HCT116 (cell line): ENCODE measurements at regions of chr11 and their contacts with region 1.

Region 1: GRCh38 chr11:47355283-47356128 is 3.0 kb upstream of the MYBPC3 start:
- DNase-seq: peak; percentile 92
- ATAC-seq: peak; percentile 95
- H3K4me3 ChIP-seq: peak overlapping the region; percentile 13 to 42
- H3K27ac ChIP-seq: peak overlapping the region; percentile 8; the same call in 1 of the 2 replicates
- H3K4me1 ChIP-seq: peaks cover 0 to 13% of the 10 kb centered on the region in 2 experiments; a peak in 2 of 4 replicates
- H3K27me3 ChIP-seq: no peaks in the 10 kb centered on the region
- CTCF ChIP-seq: peak; percentile 96 to 100 (median 98)
- POLR2A ChIP-seq: peak; percentile 48
- RAD21 ChIP-seq: peak; percentile 99

Region 2: GRCh38 chr11:46889689-46890475 is 465.6 kb before region 1 on chr11:
- CTCF ChIA-PET with region 1: no interaction called
- POLR2A ChIA-PET with region 1: no interaction called
- RAD21 ChIA-PET with region 1: no interaction called
- intact Hi-C with region 1: loop called (anchors 1 kb)
- DNase-seq: peak; percentile 47
- ATAC-seq: peak; percentile 87
- H3K4me3 ChIP-seq: no peak overlapping the region
- H3K27ac ChIP-seq: no peak overlapping the region
- H3K4me1 ChIP-seq: no peaks in the 10 kb centered on the region
- H3K27me3 ChIP-seq: no peaks in the 10 kb centered on the region
- CTCF ChIP-seq: peak; percentile 82 to 94 (median 90)
- POLR2A ChIP-seq: no peak
- RAD21 ChIP-seq: peak; percentile 93

Region 3: DNA sequence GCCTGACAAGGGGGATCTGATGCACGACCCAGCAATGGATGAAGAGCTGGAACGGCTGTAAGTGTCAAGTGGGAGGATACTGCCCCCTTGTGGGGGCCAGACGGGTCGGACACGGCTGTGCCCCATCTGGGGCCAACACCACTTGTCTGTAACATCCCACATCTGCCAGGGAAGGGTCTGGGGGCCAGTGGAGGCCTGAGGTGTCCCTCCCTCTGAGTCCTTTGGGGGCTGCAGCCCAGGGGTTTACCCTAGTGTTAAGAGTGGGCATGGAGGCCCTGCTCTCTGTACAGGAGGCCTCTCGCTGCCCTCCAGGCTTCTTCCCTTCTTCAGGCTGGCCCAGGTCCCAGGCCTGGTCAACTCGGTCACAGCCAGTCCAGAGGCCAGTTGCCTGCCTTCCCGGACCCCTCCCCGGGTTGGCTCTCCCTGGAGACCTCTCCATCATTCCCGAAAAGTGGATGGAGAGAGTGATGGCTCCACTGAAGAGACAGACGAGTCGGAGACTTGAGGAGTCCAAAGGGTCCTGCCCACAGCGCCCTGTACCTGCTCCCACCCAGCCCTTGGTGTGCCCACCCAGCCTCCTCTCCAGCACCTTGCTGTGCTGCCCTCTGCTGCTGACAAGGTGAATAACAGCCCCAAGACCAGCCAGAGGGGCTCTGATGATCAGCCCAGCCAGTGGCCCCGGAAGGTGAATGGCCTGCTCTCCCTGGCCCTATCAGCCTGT is 194.2 kb before region 1 on chr11:
- CTCF ChIA-PET with region 1: interaction called, 3 read pairs
- POLR2A ChIA-PET with region 1: no interaction called
- RAD21 ChIA-PET with region 1: no interaction called
- intact Hi-C with region 1: loop called (anchors 1 kb)
- DNase-seq: no peak
- ATAC-seq: peak; percentile 89
- H3K4me3 ChIP-seq: no peak overlapping the region
- H3K27ac ChIP-seq: no peak overlapping the region
- H3K4me1 ChIP-seq: no peaks in the 10 kb centered on the region
- H3K27me3 ChIP-seq: no peaks in the 10 kb centered on the region
- CTCF ChIP-seq: peak; percentile 68 to 92 (median 82)
- POLR2A ChIP-seq: no peak
- RAD21 ChIP-seq: peak; percentile 71

Region 4: DNA sequence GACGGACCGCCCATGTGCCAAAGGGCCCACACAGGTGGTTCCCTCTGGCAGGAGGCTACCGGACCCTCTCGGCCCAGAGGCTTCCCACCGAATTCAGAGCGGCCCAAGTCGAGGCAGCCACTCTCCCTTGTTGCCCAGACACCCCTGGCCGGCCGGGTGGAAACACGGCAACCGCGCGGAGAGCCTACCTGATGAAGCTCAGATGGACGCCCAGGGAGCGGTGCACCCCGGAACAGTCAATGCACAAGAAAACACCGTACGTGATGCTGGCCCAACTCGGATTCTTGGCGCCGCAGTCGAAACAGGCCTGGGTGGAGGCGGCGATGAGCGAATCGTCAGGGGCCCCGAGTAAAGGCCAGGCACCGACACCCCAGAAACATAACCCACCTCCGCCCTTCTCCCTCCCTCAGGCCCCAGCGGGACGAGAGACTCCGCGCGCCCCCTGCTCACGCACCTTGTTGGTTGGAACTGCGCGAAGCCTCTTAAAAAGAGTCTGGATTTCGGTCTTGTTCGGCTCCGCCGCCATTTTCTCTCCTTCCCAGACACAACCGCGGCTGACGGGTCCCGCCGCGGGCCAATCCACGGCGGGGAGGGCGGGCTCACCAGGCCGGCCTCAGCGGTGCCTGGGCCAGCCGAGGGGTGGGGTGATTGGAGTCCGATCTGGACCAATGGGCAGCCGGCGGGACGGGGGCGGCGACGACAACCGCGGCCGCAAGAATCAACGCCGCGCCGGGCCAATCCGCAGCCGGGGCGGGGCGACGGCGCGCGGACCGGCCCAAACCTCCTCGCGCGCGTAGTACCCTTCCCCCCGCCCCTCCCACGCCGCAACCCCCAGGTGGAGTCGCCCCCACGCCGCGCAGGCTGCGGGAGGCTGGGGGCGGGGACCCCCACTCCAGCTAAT is 178.9 kb before region 1 on chr11 and contains the start of gene ARFGAP2:
- CTCF ChIA-PET with region 1: interaction called, 11 read pairs
- POLR2A ChIA-PET with region 1: no interaction called
- RAD21 ChIA-PET with region 1: no interaction called
- intact Hi-C with region 1: loop called (anchors 1 kb)
- DNase-seq: peak; percentile 86
- ATAC-seq: peak; percentile 94
- H3K4me3 ChIP-seq: peak within 1 kb of the TSS; percentile 97 to 99
- H3K27ac ChIP-seq: peak within 1 kb of the TSS; percentile 89
- H3K4me1 ChIP-seq: peaks cover 11 to 24% of the 10 kb centered on the region in 2 experiments; a peak in 3 of 4 replicates
- H3K27me3 ChIP-seq: no peaks in the 10 kb centered on the region
- CTCF ChIP-seq: no peak
- POLR2A ChIP-seq: no peak
- RAD21 ChIP-seq: no peak
- total RNA-seq, gene ARFGAP2: 73.5 TPM

Region 5: GRCh38 chr11:47259178-47259977 is 96.1 kb before region 1 on chr11:
- CTCF ChIA-PET with region 1: interaction called, 4 read pairs
- POLR2A ChIA-PET with region 1: no interaction called
- RAD21 ChIA-PET with region 1: no interaction called
- intact Hi-C with region 1: loop called (anchors 10 kb)
- DNase-seq: no peak
- ATAC-seq: peak; percentile 88
- H3K4me3 ChIP-seq: no peak overlapping the region
- H3K27ac ChIP-seq: no peak overlapping the region
- H3K4me1 ChIP-seq: peaks cover 7 to 10% of the 10 kb centered on the region in 2 experiments
- H3K27me3 ChIP-seq: no peaks in the 10 kb centered on the region
- CTCF ChIP-seq: peak; percentile 63 to 69 (median 68)
- POLR2A ChIP-seq: no peak
- RAD21 ChIP-seq: peak; percentile 69

Region 6: GRCh38 chr11:47269829-47270305 is 85.6 kb before region 1 on chr11 and contains the start of gene MADD:
- CTCF ChIA-PET with region 1: interaction called, 3 read pairs
- POLR2A ChIA-PET with region 1: no interaction called
- RAD21 ChIA-PET with region 1: no interaction called
- intact Hi-C with region 1: loop called (anchors 2 kb)
- DNase-seq: peak; percentile 55
- ATAC-seq: peak; percentile 88
- H3K4me3 ChIP-seq: peak within 1 kb of the TSS; percentile 59 to 76
- H3K27ac ChIP-seq: peak within 1 kb of the TSS; percentile 89
- H3K4me1 ChIP-seq: peaks cover 21 to 42% of the 10 kb centered on the region in 2 experiments
- H3K27me3 ChIP-seq: no peaks in the 10 kb centered on the region
- CTCF ChIP-seq: no peak
- POLR2A ChIP-seq: peak; percentile 52
- RAD21 ChIP-seq: no peak
- total RNA-seq, gene MADD: 37.1 TPM

Region 7: DNA sequence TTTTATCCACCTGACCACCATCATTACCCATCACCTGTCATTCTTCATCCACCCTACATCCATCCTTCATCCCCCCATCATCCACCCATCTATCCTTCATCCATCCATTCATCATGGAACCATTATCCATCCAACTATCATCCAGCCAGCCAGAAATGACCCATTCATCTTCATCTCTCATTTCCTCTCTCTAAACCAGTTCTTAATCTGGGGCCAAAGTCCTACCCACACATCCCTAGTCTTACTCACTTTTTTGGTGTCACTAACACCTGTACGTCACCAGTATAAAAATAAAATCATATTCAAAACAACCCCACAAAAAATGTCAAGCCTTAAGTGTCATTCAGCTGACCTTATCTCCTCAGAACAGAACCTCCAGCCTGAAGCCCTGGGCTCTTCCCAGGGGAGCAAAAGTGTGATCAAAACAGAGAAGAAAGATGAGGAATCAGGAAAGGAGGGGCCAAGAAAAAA is 10.5 kb after region 1 on chr11:
- CTCF ChIA-PET with region 1: no interaction called
- POLR2A ChIA-PET with region 1: no interaction called
- RAD21 ChIA-PET with region 1: no interaction called
- intact Hi-C with region 1: no loop called
- DNase-seq: no peak
- ATAC-seq: no peak
- H3K4me3 ChIP-seq: no peak overlapping the region
- H3K27ac ChIP-seq: no peak overlapping the region
- H3K4me1 ChIP-seq: no peaks in the 10 kb centered on the region
- H3K27me3 ChIP-seq: no peaks in the 10 kb centered on the region
- CTCF ChIP-seq: no peak
- POLR2A ChIP-seq: no peak
- RAD21 ChIP-seq: no peak